A673 (cell line): ENCODE measurements at regions of chr13 and their contacts with region 1.

Region 1: GRCh38 chr13:46534432-46534831 is 18.5 kb upstream of the LRCH1 start:
- DNase-seq: no peak
- H3K4me3 ChIP-seq: no peak overlapping the region
- H3K27ac ChIP-seq: no peak overlapping the region
- H3K4me1 ChIP-seq: peaks cover 26% of the 10 kb centered on the region
- H3K27me3 ChIP-seq: no peaks in the 10 kb centered on the region
- CTCF ChIP-seq: no peak

Region 2: DNA sequence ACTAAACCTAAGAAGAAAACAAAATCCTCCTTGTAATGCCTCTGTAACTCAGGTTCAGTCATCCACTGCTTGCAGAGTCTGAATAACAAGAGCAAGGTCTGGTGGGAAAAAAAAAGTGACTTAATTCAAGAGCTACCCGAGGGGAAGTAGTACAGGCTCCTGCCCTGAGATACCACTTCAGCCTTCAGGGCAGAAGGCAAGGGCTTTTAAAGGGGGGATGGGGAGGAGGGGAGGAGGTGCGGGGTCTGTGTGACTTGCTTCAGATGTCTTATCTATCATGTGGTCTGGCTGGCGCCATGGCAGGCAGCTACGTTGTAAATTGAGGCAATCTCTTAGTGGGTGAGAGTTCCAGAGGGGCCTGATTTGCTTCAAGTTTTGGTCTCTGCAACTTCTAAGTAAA is 256.0 kb before region 1 on chr13:
- CTCF ChIA-PET with region 1: no interaction called
- POLR2A ChIA-PET with region 1: no interaction called
- intact Hi-C with region 1: no loop called
- DNase-seq: no peak
- H3K4me3 ChIP-seq: no peak overlapping the region
- H3K27ac ChIP-seq: no peak overlapping the region
- H3K4me1 ChIP-seq: no peaks in the 10 kb centered on the region
- H3K27me3 ChIP-seq: no peaks in the 10 kb centered on the region
- CTCF ChIP-seq: no peak

Region 3: GRCh38 chr13:46614582-46614981 is 80.2 kb after region 1 on chr13:
- CTCF ChIA-PET with region 1: no interaction called
- POLR2A ChIA-PET with region 1: no interaction called
- intact Hi-C with region 1: no loop called
- DNase-seq: no peak
- H3K4me3 ChIP-seq: no peak overlapping the region
- H3K27ac ChIP-seq: no peak overlapping the region
- H3K4me1 ChIP-seq: peaks cover 50% of the 10 kb centered on the region
- H3K27me3 ChIP-seq: no peaks in the 10 kb centered on the region
- CTCF ChIP-seq: 0 out of 2 replicates have a peak, but pooled peaks have one; percentile 25

Region 4: GRCh38 chr13:46926916-46927590 is 392.6 kb after region 1 on chr13:
- CTCF ChIA-PET with region 1: no interaction called
- POLR2A ChIA-PET with region 1: no interaction called
- intact Hi-C with region 1: no loop called
- DNase-seq: no peak
- H3K4me3 ChIP-seq: no peak overlapping the region
- H3K27ac ChIP-seq: no peak overlapping the region
- H3K4me1 ChIP-seq: no peaks in the 10 kb centered on the region
- H3K27me3 ChIP-seq: peaks cover 17% of the 10 kb centered on the region
- CTCF ChIP-seq: no peak

Region 5: GRCh38 chr13:47256618-47257017 is 722.2 kb after region 1 on chr13:
- CTCF ChIA-PET with region 1: interaction called, 12 read pairs
- POLR2A ChIA-PET with region 1: no interaction called
- intact Hi-C with region 1: no loop called
- DNase-seq: no peak
- H3K4me3 ChIP-seq: no peak overlapping the region
- H3K27ac ChIP-seq: no peak overlapping the region
- H3K4me1 ChIP-seq: no peaks in the 10 kb centered on the region
- H3K27me3 ChIP-seq: peaks cover 28% of the 10 kb centered on the region
- CTCF ChIP-seq: no peak